Posterior vena cava (tissue), 2 donors: ENCODE measurements at regions of chr15 and their contacts with region 1.

Region 1: GRCh38 chr15:67274236-67274635 is 19.6 kb downstream of the IQCH start:
- DNase-seq: no peak

Region 2: DNA sequence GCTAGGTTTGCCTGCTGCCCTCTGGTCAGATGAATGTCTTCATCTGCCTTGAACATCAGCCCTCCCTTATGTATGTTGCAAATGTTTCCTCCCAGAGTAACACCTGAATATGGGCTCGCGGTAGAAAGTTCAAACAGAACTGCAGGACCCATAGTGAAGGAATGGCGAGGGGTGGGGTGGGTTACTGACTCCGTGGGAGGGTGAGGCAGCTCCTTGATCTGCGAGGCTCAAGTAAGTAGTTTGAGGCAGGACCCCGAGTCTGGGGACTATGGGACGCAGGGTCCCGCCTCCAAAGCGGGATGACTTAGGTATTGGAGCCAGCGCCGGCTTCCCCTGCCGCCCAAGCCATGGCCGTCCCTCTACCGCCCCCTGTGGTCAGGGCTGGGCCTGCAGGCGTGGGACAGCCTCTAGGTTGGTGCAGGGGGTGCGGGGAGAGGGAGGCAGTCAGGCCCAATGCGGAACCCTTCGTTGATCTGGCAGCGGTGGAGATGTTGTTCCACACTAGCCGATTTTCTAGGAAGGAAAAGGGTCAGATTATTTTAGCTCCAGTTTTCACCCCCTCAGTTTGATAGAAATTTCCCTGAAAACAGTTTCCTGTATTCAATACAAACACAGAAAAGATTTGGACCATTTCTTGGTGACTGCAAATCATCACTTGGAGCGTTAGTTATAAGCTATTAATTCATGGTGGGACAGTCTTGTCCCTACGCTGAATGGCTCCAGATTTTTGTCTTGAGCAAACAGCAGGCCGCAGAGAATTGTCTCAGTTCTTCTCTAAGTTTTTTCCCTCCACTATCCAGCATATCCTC is 1376.9 kb after region 1 on chr15:
- intact Hi-C with region 1: loop called in 1 of 2 experiments (anchors 10 kb)
- DNase-seq: peak; percentile 86